ENCODE measurements at regions of chr5 and their contacts with region 1.

Region 1: GRCh38 chr5:151115274-151115905 is 34.6 kb upstream of the TNIP1 start:
- DNase-seq: peak; percentile 57 to 79 (median 65)
- H3K4me3 ChIP-seq: no peak overlapping the region
- H3K4me3 Mint-ChIP-seq: no peak overlapping the region
- H3K27ac ChIP-seq: no peak overlapping the region
- H3K27ac Mint-ChIP-seq: peak overlapping the region in 7 of 8 donors; percentile 21 to 57 (median 42)
- H3K4me1 ChIP-seq: peaks cover 4% of the 10 kb centered on the region
- H3K4me1 Mint-ChIP-seq: peaks cover 0 to 32% (median 6%) of the 10 kb centered on the region in 3 donors
- H3K27me3 ChIP-seq: no peaks in the 10 kb centered on the region
- H3K27me3 Mint-ChIP-seq: no peaks in the 10 kb centered on the region

Region 2: GRCh38 chr5:150791536-150791935 is 323.9 kb before region 1 on chr5:
- CTCF ChIA-PET with region 1: no interaction called
- POLR2A ChIA-PET with region 1: no interaction called
- DNase-seq: no peak
- H3K4me3 ChIP-seq: no peak overlapping the region
- H3K4me3 Mint-ChIP-seq: no peak overlapping the region
- H3K27ac ChIP-seq: no peak overlapping the region
- H3K27ac Mint-ChIP-seq: peak overlapping the region in 3 of 8 donors; percentile 5 to 29 (median 28)
- H3K4me1 ChIP-seq: peaks cover 24% of the 10 kb centered on the region
- H3K4me1 Mint-ChIP-seq: peaks cover 20 to 47% (median 31%) of the 10 kb centered on the region in 3 donors
- H3K27me3 ChIP-seq: no peaks in the 10 kb centered on the region
- H3K27me3 Mint-ChIP-seq: no peaks in the 10 kb centered on the region

Region 3: DNA sequence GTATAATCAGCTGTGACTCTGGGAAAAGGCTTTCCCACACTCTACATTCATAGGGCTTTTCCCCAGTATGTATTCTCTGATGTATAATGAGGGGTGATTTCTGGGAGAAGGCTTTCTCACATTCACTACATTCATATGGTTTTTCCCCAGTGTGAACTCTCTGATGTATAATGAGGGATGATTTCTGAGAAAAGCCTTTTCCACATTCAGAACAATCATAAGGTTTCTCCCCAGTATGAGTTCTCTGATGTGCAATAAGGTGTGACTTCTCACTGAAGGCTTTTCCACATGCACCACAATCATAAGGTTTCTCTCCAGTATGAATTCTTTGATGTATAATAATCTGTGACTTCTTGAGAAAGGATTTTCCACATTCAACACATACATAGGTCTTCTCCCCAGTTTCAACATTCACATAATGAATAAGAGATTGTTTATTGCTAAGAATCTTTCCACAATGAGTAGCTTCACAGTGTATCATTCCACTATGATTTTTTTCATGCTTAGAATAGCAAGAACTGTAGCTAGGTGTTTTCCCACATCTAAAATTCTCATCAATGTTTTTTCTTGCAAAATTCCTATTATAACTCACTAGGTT is 183.9 kb before region 1 on chr5:
- CTCF ChIA-PET with region 1: no interaction called
- POLR2A ChIA-PET with region 1: no interaction called
- DNase-seq: no peak
- H3K4me3 ChIP-seq: no peak overlapping the region
- H3K4me3 Mint-ChIP-seq: no peak overlapping the region
- H3K27ac ChIP-seq: no peak overlapping the region
- H3K27ac Mint-ChIP-seq: no peak overlapping the region
- H3K4me1 ChIP-seq: no peaks in the 10 kb centered on the region
- H3K4me1 Mint-ChIP-seq: no peaks in the 10 kb centered on the region
- H3K27me3 ChIP-seq: no peaks in the 10 kb centered on the region
- H3K27me3 Mint-ChIP-seq: peaks cover 0 to 9% of the 10 kb centered on the region in 2 donors

Region 4: DNA sequence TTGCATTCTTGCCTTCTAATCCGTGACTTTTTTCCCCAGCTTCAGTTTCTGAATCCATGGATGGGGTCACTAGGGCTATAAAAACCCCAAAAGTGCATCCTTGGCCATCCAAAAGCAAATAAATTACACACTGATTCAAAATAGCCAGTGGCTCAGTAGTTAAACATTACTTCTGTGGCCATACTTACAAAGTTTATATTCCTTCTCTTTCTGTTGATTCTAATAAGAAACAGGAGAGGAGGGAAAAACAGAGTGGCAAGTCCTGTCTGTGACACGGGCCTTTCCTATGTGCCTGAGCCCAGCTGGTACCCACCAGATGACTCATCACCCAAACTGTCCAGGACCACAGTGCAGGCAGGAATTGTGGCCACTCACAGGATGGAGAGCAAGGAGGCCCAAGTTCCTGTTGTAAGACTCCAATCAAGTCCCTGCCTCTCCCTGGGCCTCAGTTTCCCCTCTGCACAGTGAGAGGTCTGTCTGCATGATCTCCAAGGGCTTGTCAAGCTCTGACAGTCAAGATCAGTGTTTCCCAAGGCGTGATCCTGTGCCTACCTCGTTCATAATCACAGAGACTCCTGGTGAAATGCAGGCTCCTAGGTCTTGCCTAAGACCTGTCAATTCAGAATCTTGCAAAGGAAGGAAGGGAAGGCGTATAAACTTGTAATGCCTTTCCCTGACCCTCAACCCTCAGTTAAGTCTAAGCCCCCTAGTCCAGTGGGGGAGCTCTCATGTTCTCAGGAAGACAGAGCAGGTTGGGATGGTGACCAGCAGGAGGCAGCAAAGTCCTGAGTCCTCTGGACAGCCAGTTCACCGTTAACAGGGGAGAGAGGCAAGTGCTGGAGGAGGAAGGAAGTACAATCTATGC is 64.1 kb before region 1 on chr5:
- CTCF ChIA-PET with region 1: interaction called, 267 read pairs
- POLR2A ChIA-PET with region 1: interaction called, 6 read pairs
- DNase-seq: peak; percentile 49 to 81 (median 57)
- H3K4me3 ChIP-seq: no peak overlapping the region
- H3K4me3 Mint-ChIP-seq: no peak overlapping the region
- H3K27ac ChIP-seq: no peak overlapping the region
- H3K27ac Mint-ChIP-seq: peak overlapping the region in 5 of 8 donors; percentile 54 to 79 (median 74)
- H3K4me1 ChIP-seq: no peaks in the 10 kb centered on the region
- H3K4me1 Mint-ChIP-seq: peaks cover 9 to 23% (median 17%) of the 10 kb centered on the region in 3 donors
- H3K27me3 ChIP-seq: no peaks in the 10 kb centered on the region
- H3K27me3 Mint-ChIP-seq: no peaks in the 10 kb centered on the region

Region 5: DNA sequence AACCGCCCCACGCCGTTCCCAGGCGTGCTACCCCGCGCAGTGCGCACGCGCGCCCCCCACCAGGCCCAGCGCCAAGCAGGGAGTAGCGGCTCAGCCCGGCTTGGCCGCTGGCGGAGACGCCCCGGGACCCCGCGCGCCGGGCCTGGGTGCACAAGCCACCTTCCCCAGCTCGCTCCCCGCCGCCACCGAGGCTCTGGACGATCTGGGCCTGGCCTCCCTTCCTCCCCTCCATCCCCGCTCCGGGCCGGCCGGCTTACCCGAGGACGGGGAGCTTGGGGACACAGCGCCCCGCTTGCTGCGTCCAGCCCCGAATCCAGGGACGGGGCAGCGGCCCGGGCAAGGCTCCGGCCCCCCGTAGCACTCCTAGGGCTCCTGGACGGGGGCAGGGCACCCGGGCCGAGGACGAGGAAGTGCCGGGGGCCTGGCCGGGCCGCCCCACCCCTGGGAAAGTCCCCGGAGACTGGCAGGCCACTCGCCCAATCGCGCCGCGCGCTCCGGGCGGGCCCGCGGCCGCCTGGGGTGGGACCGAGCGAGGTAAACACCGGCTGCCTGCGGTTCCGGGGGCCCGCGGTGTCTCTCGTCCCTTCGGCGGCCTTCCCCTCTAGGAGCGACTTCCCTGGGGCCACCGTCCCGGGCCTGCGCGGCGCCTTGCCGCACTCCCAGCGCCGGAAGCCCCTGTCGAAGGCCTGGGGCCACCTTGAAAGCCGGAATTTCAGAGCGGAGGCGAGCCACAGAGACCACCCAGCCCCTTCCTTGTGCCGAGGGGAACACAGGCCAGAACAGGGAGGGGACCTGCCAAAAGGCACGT is 34.6 kb before region 1 on chr5 and contains the start of gene TNIP1:
- CTCF ChIA-PET with region 1: interaction called, 40 read pairs
- POLR2A ChIA-PET with region 1: no interaction called
- DNase-seq: peak; percentile 90 to 95 (median 93)
- H3K4me3 ChIP-seq: peak within 1 kb of the TSS; percentile 93
- H3K4me3 Mint-ChIP-seq: peak within 1 kb of the TSS; percentile 83 to 96 (median 90)
- H3K27ac ChIP-seq: peak within 1 kb of the TSS; percentile 97
- H3K27ac Mint-ChIP-seq: peak within 1 kb of the TSS; percentile 82 to 99 (median 96)
- H3K4me1 ChIP-seq: peaks cover 84% of the 10 kb centered on the region
- H3K4me1 Mint-ChIP-seq: peaks cover 75 to 91% (median 86%) of the 10 kb centered on the region in 3 donors
- H3K27me3 ChIP-seq: no peaks in the 10 kb centered on the region
- H3K27me3 Mint-ChIP-seq: no peaks in the 10 kb centered on the region
- total RNA-seq, gene TNIP1: 212 to 213 TPM

Region 6: DNA sequence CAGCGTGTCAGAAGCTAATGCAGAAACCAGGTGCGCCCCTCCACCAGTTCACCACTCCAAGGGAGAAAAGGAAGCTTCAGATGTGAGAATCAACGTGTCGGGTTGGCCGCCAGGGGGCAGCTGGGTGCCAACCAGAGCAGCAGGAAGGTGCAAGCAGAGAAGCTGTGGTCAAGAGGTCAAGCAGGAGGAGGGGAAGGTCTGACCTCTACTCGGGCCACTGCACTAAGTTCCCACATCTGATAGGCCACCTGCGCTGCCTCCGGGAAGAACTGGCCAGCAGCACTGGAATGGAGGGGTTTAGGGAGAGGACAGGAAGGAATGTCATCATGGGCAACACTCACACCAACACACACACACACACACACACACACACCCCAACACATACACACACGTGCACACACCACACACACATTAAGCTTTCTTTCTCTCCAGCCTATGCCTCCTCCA is 10.8 kb after region 1 on chr5:
- CTCF ChIA-PET with region 1: interaction called, 51 read pairs
- POLR2A ChIA-PET with region 1: interaction called, 3 read pairs
- DNase-seq: peak; percentile 52 to 75 (median 57)
- H3K4me3 ChIP-seq: no peak overlapping the region
- H3K4me3 Mint-ChIP-seq: peak overlapping the region in 1 of 7 donors; percentile 2
- H3K27ac ChIP-seq: no peak overlapping the region
- H3K27ac Mint-ChIP-seq: peak overlapping the region; percentile 10 to 95 (median 76)
- H3K4me1 ChIP-seq: peaks cover 15% of the 10 kb centered on the region
- H3K4me1 Mint-ChIP-seq: peaks cover 30 to 61% (median 51%) of the 10 kb centered on the region in 3 donors
- H3K27me3 ChIP-seq: no peaks in the 10 kb centered on the region
- H3K27me3 Mint-ChIP-seq: no peaks in the 10 kb centered on the region

Region 7: DNA sequence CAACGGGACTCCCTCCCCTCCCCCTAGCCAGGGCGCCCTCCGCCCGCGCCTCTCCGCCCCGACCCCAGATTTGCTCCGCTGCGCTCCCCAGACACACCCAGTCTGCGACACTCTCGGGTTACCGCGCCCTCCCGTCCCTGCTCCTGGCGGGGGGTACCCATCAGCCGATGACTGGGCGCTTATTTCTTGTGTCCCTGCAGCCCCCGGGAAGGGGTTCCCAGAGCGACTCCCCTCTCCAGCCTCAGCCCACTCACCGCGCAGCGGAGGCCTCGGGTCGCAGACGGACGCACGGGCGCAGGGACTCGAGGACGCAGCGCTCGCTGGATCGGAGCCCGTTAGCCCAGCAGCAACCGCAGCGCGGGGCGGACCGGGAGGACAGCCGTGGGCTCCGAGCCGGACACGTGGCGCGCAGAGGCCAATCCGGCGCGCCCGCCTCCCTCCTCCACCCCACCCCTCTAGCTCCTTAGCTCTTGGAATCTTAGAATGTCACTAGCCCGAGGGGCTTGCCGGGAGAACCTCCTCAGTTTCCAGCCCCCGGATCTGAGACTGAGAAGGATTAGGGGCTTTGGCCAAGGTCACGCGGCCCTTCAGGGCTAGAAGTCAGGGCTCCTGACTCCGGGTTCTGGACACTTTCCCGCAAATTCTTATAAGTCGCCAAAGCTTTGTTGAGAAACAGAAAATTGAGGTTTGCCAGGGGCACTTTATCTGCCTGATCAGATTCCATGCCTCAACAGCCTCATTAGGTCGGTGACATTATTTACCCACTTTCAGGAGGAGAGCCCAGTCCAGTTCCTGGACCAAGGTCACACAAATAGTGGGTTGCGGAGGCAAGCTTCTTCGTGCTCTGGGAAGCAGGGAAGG is 42.3 kb after region 1 on chr5 and contains the start of gene ANXA6:
- CTCF ChIA-PET with region 1: interaction called, 117 read pairs
- POLR2A ChIA-PET with region 1: no interaction called
- DNase-seq: peak; percentile 59 to 80 (median 67)
- H3K4me3 ChIP-seq: peak within 1 kb of the TSS; percentile 86
- H3K4me3 Mint-ChIP-seq: peak within 1 kb of the TSS; percentile 96 to 99 (median 97)
- H3K27ac ChIP-seq: peak within 1 kb of the TSS; percentile 70
- H3K27ac Mint-ChIP-seq: peak within 1 kb of the TSS; percentile 86 to 99 (median 94)
- H3K4me1 ChIP-seq: peaks cover 48% of the 10 kb centered on the region
- H3K4me1 Mint-ChIP-seq: peaks cover 52 to 59% (median 58%) of the 10 kb centered on the region in 3 donors
- H3K27me3 ChIP-seq: no peaks in the 10 kb centered on the region
- H3K27me3 Mint-ChIP-seq: peaks cover 0 to 2% of the 10 kb centered on the region in 2 donors
- total RNA-seq, gene ANXA6: 452 to 459 TPM